ENCODE measurements at regions of chr2 and their contacts with region 1.

Region 1: DNA sequence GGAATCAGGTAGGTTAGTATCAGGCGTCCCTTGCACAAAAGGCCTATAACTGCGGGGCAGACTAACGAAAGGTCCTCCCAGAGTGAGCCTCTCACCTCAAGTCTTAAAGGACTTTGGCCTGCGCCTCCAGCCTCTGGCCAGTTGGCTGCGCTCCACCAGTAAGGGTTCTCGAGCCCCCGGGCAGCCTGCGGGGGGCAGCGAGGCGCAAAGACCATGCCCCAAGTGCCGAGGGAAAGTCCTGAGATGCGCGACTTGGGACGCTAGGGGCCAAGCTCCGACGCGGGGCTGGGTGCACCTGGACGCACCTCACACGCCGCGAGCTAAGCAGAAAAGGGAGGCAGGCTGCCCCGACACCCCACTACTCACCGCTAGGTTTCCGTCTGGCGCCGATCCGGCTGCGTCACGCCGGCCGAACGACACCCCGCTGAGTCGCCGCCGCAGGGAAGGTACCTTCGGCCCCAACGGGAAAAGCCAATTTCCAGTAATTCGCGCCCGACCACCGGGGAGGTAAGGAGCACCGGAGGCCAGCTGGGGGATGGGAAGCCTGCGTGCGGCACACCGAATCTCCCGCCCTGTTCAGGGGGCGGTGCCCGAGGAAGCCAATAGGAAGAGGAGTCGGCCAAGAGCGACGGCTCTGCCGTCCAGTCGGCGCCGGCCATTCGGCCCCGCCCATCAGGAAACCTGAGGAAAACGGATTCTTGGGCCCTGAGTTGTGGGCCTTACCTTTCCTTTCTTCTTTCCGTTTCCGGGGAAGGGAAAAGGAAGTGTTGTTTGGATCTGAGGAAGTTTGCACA is at the start of gene ORC2:
- DNase-seq: peak; percentile 87 to 96 (median 90)
- ATAC-seq: peak; percentile 95
- H3K4me3 ChIP-seq: peak within 1 kb of the TSS; percentile 98
- H3K4me3 Mint-ChIP-seq: peak within 1 kb of the TSS; percentile 99
- H3K27ac ChIP-seq: peak within 1 kb of the TSS; percentile 89 to 92
- H3K27ac Mint-ChIP-seq: peak within 1 kb of the TSS; percentile 100
- H3K4me1 ChIP-seq: peaks cover 25% of the 10 kb centered on the region
- H3K4me1 Mint-ChIP-seq: peaks cover 73% of the 10 kb centered on the region
- H3K27me3 ChIP-seq: no peaks in the 10 kb centered on the region
- H3K27me3 Mint-ChIP-seq: no peaks in the 10 kb centered on the region
- CTCF ChIP-seq: peak; percentile 74
- total RNA-seq, gene ORC2: 25.0 to 26.6 TPM

Region 2: DNA sequence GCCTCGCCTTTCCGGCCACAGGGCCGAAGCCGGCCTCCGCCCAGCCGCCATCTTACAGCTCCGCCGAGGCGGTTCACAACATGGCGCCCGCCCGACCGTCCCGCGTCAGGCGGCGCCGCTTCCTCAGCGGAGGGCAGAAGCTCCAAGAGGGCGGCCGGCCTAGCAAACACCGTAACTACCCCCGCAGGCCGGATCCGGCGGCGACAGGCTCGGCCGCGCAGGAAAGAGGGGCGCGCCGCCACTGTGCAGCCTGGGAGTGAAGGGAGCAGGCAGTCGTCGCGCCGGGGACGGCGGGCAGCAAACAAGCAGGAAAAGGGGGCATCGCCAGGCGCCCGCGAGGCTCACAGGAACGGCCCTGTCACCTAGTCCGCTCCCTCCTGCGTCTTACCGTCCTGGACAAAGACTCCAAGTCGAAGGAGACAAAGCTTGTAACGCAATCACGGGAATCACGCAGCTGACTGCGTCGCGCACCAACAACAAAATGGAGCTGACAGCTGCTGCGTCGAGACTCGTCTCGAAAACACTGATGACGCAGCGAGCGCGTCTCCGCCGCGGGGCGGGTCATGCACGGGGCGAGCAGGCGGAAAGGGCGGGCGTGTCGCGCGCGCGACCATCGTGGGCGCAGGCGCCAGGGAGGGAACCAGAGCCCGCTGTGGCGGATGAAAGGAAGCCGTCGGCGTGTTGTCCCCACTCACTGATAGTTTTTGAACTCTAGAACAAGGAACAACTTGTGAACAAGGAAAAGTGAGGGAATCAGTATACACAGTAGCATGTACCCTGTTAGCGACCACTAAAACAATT is 98.9 kb before region 1 on chr2 and contains the start of gene CLK1:
- CTCF ChIA-PET with region 1: interaction called, 3 read pairs
- POLR2A ChIA-PET with region 1: interaction called, 56 read pairs
- intact Hi-C with region 1: loop called in 1 of 2 experiments (anchors 5 kb)
- DNase-seq: peak; percentile 95 to 98 (median 97)
- ATAC-seq: peak; percentile 75
- H3K4me3 ChIP-seq: peak within 1 kb of the TSS; percentile 96
- H3K4me3 Mint-ChIP-seq: peak within 1 kb of the TSS; percentile 97
- H3K27ac ChIP-seq: peak within 1 kb of the TSS; percentile 100
- H3K27ac Mint-ChIP-seq: peak within 1 kb of the TSS; percentile 88
- H3K4me1 ChIP-seq: peaks cover 26% of the 10 kb centered on the region
- H3K4me1 Mint-ChIP-seq: peaks cover 48% of the 10 kb centered on the region
- H3K27me3 ChIP-seq: no peaks in the 10 kb centered on the region
- H3K27me3 Mint-ChIP-seq: peaks cover 4% of the 10 kb centered on the region
- CTCF ChIP-seq: no peak
- total RNA-seq, gene CLK1: 1,228 to 1,235 TPM

Region 3: DNA sequence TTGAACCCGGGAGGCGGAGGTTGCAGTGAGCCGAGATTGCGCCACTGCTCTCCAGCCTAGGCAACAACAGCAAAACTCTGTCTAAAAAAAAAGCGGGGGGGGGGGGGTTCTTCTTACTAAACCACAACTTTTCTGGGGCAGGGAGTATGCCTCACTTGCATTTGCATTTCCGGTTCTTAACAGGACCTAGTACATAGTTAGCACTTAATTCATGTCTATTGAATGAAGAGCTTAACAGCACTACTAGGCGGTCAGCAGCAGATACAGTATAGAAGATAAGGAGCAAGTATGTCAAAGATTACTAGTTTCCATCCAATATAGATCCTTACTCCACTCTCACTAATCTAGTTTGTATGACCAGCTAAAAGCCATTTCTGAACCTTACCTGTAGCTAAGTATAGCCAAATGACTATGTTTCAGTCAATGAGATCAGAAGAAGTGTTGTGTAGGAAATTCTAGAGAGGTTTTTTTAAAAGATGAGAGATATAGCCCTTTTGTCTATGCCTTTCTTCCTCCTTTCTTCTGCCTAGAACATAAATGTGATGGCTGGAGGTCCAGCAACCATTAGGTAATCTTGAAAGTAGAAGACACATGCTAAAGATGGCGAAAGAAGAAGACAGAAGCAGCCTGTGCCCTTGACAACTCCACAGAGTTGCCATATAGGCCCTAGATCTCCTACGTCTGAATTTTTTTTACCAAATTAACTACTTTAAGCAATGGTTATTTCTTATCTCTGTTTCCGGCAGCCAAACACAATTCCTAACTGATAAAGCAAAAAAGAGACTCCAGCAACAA is 96.8 kb after region 1 on chr2:
- CTCF ChIA-PET with region 1: interaction called, 3 read pairs
- POLR2A ChIA-PET with region 1: no interaction called
- intact Hi-C with region 1: loop called in 1 of 2 experiments (anchors 5 kb)
- DNase-seq: peak in 2 of 14 experiments; percentile 15 to 44
- ATAC-seq: peak; percentile 29
- H3K4me3 ChIP-seq: no peak overlapping the region
- H3K4me3 Mint-ChIP-seq: no peak overlapping the region
- H3K27ac ChIP-seq: no peak overlapping the region
- H3K27ac Mint-ChIP-seq: peak overlapping the region; percentile 32
- H3K4me1 ChIP-seq: peaks cover 9% of the 10 kb centered on the region
- H3K4me1 Mint-ChIP-seq: peaks cover 57% of the 10 kb centered on the region
- H3K27me3 ChIP-seq: no peaks in the 10 kb centered on the region
- H3K27me3 Mint-ChIP-seq: no peaks in the 10 kb centered on the region
- CTCF ChIP-seq: no peak

Region 4: GRCh38 chr2:201158111-201158929 is 195.0 kb after region 1 on chr2:
- CTCF ChIA-PET with region 1: interaction called, 11 read pairs
- POLR2A ChIA-PET with region 1: interaction called, 12 read pairs
- intact Hi-C with region 1: loop called in 1 of 2 experiments (anchors 1 kb)
- DNase-seq: peak in 13 of 14 experiments; percentile 20 to 84 (median 50)
- ATAC-seq: peak; percentile 93
- H3K4me3 ChIP-seq: no peak overlapping the region
- H3K4me3 Mint-ChIP-seq: no peak overlapping the region
- H3K27ac ChIP-seq: peak overlapping the region; percentile 52 to 63
- H3K27ac Mint-ChIP-seq: peak overlapping the region; percentile 82
- H3K4me1 ChIP-seq: peaks cover 13% of the 10 kb centered on the region
- H3K4me1 Mint-ChIP-seq: peaks cover 12% of the 10 kb centered on the region
- H3K27me3 ChIP-seq: no peaks in the 10 kb centered on the region
- H3K27me3 Mint-ChIP-seq: no peaks in the 10 kb centered on the region
- CTCF ChIP-seq: peak; percentile 70

Measured in CD4-positive, alpha-beta T cell (primary cell).